ENCODE measurements at regions of chr12 and their contacts with region 1.

Region 1: DNA sequence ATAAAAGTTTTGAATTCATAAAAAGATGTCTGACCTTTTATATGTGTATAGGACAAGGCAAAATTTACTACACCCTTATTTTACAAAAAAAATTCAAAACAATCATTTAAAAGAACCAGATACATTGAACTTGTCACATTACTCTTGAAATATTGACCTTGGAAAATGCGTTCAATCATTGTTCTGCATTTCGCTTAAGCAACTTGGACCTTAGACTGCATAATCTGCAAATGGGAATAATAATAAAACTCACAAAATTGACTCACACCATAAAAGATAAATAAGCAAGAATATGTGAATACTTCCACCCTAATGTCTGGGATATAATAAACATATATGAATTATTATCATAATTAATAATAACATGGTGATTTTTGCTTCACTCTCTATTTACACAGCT is 69.4 kb upstream of the PTPRB start:
- DNase-seq: no peak
- H3K4me3 ChIP-seq: no peak overlapping the region
- H3K27ac ChIP-seq: no peak overlapping the region
- H3K4me1 ChIP-seq: no peaks in the 10 kb centered on the region
- H3K27me3 ChIP-seq: no peaks in the 10 kb centered on the region
- CTCF ChIP-seq: no peak

Region 2: GRCh38 chr12:70609711-70610491 is 96.7 kb before region 1 on chr12:
- intact Hi-C with region 1: loop called (anchors 5 kb)
- DNase-seq: peak; percentile 75
- H3K4me3 ChIP-seq: peak overlapping the region; percentile 44
- H3K27ac ChIP-seq: peak overlapping the region; percentile 50
- H3K4me1 ChIP-seq: no peaks in the 10 kb centered on the region
- H3K27me3 ChIP-seq: no peaks in the 10 kb centered on the region
- CTCF ChIP-seq: no peak

Region 3: DNA sequence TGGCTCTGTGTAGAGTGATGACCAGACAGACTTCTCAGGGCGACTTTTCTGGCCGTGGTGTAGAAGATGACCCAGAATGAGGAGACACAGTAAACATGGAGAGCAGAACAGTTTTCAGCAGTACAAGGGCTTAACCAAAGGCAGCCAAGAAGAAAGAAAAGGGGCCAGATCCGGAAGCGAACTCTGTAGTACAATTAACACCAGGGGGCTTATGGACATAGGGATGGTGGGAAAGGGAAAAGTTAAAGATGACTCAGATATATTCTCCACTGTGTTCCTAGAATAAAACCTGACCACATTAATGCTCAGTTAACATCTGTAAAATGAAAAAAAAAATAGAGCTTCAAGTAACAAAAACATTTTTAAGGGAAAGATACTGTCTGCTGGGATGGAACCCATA is 793.2 kb after region 1 on chr12:
- intact Hi-C with region 1: no loop called
- DNase-seq: no peak
- H3K4me3 ChIP-seq: no peak overlapping the region
- H3K27ac ChIP-seq: no peak overlapping the region
- H3K4me1 ChIP-seq: no peaks in the 10 kb centered on the region
- H3K27me3 ChIP-seq: no peaks in the 10 kb centered on the region
- CTCF ChIP-seq: no peak